ENCODE measurements at regions of chr10 and their contacts with region 1.

Region 1: GRCh38 chr10:99560277-99561126 is 27.8 kb downstream of the NKX2-3 start:
- H3K4me3 ChIP-seq: no peak overlapping the region
- H3K27ac ChIP-seq: no peak overlapping the region
- H3K4me1 ChIP-seq: peaks cover 5% of the 10 kb centered on the region
- CTCF ChIP-seq: peak; percentile 56

Region 2: DNA sequence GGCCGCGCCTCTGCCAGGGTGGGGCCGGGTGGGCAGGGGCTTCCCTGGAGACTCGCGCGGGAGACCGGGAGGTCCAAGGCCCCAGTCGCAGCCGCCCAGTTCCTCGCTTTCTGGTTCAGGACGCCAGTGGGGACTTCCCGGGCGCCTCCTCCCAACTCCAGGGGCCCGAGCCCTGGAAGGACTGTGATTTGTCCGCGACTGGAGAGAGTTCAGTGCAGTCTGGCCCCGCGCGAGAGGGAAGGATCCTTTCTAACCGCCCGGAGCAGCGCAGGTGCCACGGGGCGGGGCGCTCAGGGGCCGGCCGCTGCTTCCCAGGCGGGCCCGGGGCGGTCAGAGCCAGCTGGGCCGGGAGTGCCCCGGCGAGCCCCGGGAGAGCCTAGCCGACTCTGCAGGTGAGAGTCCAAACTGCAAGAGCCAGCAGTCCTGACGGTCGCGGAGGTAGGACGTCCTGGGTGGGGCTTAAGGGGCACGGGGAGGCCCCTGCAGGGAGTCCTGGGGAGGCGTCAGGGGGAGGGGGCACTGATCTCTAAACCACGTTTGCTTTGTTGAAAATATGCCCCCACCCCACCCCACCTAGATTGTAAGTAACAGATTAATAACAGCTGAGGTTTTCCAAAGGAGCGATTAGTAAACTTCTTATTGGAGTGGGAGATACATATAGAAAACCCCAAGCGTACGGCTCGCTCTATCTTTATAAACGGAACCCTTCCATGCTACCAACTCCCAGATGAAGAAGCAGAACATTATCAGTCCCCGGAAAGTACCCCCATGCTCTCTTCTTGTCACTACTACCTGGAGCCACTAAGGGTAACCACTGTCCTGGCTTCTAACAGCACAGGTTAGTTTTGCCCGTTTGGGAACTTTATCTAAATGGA is 19.6 kb before region 1 on chr10:
- CTCF ChIA-PET with region 1: interaction called, 21 read pairs
- POLR2A ChIA-PET with region 1: no interaction called
- H3K4me3 ChIP-seq: peak overlapping the region; percentile 37
- H3K27ac ChIP-seq: peak overlapping the region; percentile 55; the same call in 1 of the 2 replicates
- H3K4me1 ChIP-seq: peaks cover 4% of the 10 kb centered on the region; the same call in 1 of the 2 replicates
- CTCF ChIP-seq: no peak; the same call in 1 of the 2 replicates

Region 3: DNA sequence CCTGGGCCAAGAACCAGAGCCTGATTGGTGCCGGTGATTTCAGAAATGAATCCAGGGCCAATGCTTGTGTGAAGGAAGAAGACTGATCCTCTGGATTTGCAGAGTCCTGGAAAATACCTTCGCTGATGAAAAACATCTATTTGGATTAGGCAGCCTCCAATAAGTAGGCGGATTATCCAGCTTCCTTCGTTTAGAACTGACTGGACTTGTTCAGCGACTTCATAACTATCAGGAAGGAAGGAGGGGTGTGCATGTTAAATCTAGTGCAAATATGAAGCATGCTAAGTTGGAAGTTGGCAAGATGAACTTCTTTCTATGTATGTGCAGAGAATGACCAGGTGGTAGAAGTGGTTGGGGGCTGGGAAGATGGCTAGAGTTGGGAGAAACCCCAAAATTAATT is 13.3 kb after region 1 on chr10:
- CTCF ChIA-PET with region 1: interaction called, 25 read pairs
- POLR2A ChIA-PET with region 1: no interaction called
- H3K4me3 ChIP-seq: no peak overlapping the region
- H3K27ac ChIP-seq: no peak overlapping the region
- H3K4me1 ChIP-seq: no peaks in the 10 kb centered on the region
- CTCF ChIP-seq: no peak

Region 4: DNA sequence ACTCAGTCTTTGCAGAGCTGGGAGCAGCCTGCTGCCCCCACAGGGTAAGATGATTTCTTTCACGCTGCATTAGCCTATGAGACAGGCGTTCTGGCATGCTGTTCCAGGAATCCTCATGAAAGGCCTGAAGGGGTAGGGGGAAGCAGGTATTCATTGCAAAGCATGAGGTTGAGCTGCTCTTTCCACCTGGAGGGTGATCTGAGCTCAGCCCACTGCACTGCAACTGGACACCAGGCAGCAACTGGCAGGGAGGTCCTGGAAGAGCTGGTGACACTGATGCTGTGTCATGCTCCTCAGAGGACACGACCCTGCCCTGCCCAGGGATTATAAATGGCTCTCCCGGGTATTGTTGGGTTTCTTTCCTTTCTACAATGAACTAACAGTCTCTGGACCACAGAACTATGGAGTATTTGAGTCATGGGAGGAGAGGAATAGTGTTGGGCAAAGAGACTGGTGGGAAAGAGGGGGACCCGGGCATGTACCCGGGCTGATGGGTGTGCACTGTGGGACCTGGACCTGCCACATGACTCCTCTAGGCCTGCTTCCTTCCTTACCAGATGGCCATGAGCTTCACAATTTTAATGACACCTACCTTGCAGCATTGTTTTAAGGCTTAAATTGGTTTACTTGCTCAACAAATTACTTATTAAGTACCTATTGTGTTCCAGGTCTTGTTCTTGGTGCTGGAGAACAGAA is 35.4 kb after region 1 on chr10:
- CTCF ChIA-PET with region 1: interaction called, 10 read pairs
- POLR2A ChIA-PET with region 1: no interaction called
- H3K4me3 ChIP-seq: no peak overlapping the region
- H3K27ac ChIP-seq: no peak overlapping the region
- H3K4me1 ChIP-seq: no peaks in the 10 kb centered on the region
- CTCF ChIP-seq: no peak

Region 5: GRCh38 chr10:99620713-99621453 is 60.4 kb after region 1 on chr10:
- CTCF ChIA-PET with region 1: interaction called, 71 read pairs
- POLR2A ChIA-PET with region 1: no interaction called
- H3K4me3 ChIP-seq: peak overlapping the region; percentile 59
- H3K27ac ChIP-seq: peak overlapping the region; percentile 99
- H3K4me1 ChIP-seq: 0 out of 2 replicates have a peak, but pooled peaks cover 7% of the 10 kb centered on the region
- CTCF ChIP-seq: peak; percentile 60; the same call in 1 of the 2 replicates

Measured in HEK293 (cell line).